ENCODE measurements at regions of chr11 and their contacts with region 1.

Region 1: GRCh38 chr11:119095066-119095880 is 6.4 kb downstream of the DPAGT1 start:
- DNase-seq: peak; percentile 99
- ATAC-seq: peak; percentile 90
- H3K4me3 ChIP-seq: peak overlapping the region; percentile 57
- H3K27ac ChIP-seq: peak overlapping the region; percentile 44; the same call in 1 of the 2 replicates
- H3K4me1 ChIP-seq: peaks cover 15% of the 10 kb centered on the region
- H3K27me3 ChIP-seq: no peaks in the 10 kb centered on the region
- CTCF ChIP-seq: no peak
- POLR2A ChIP-seq: peak; percentile 100
- RAD21 ChIP-seq: no peak

Region 2: GRCh38 chr11:118956094-118956846 is 139.0 kb before region 1 on chr11 and contains the start of gene UPK2:
- CTCF ChIA-PET with region 1: no interaction called
- POLR2A ChIA-PET with region 1: no interaction called
- dilution Hi-C with region 1: no loop called
- in situ Hi-C with region 1: no loop called
- intact Hi-C with region 1: no loop called
- DNase-seq: peak; percentile 71
- ATAC-seq: peak; percentile 100
- H3K4me3 ChIP-seq: no peak within 1 kb of the TSS
- H3K27ac ChIP-seq: no peak within 1 kb of the TSS
- H3K4me1 ChIP-seq: no peaks in the 10 kb centered on the region
- H3K27me3 ChIP-seq: peaks cover 51% of the 10 kb centered on the region
- CTCF ChIP-seq: peak; percentile 97
- POLR2A ChIP-seq: peak; percentile 57; the same call in 1 of the 2 replicates
- RAD21 ChIP-seq: peak; percentile 98
- total RNA-seq, gene UPK2: not detected in 2 replicates

Region 3: DNA sequence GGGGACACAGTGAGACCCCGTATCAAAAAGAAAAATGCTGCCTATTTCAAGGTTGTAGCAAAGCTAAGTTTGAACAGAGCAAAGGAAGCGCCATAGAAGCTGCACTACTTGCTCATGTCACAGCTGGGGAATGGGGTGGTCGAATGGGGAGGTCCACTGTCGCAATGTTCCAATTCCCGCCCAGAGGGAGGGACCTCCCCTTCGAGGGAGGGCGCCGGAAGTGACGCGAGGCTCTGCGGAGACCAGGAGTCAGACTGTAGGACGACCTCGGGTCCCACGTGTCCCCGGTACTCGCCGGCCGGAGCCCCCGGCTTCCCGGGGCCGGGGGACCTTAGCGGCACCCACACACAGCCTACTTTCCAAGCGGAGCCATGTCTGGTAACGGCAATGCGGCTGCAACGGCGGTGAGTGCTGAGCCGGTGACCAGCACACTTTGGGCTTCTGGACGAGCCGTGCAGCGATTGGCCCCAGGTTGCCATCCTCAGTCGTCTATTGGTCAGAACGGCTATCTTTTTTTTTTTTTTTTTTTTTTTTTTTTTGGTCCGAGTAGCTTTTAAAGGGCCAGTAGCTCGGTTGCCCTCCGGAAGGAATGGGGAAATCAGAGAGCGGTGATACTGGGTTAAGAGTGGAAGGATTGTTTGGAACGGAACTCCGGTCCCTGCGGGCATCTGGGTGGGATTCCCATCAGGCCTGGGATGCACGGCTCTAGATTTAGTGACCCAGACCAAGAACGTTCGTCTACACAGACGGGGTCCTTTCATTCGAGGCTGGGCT is 10.4 kb before region 1 on chr11 and contains the start of gene HMBS:
- CTCF ChIA-PET with region 1: no interaction called
- POLR2A ChIA-PET with region 1: interaction called, 10 read pairs
- dilution Hi-C with region 1: no loop called
- in situ Hi-C with region 1: no loop called
- intact Hi-C with region 1: loop called (anchors 1 kb)
- DNase-seq: peak; percentile 94
- ATAC-seq: peak; percentile 96
- H3K4me3 ChIP-seq: peak within 1 kb of the TSS; percentile 74
- H3K27ac ChIP-seq: peak within 1 kb of the TSS; percentile 85
- H3K4me1 ChIP-seq: peaks cover 5% of the 10 kb centered on the region
- H3K27me3 ChIP-seq: no peaks in the 10 kb centered on the region
- CTCF ChIP-seq: no peak
- POLR2A ChIP-seq: peak; percentile 68; the same call in 1 of the 2 replicates
- RAD21 ChIP-seq: no peak
- total RNA-seq, gene HMBS: 13.9 and 17.9 TPM in 2 replicates

Region 4: GRCh38 chr11:119323538-119324033 is 228.3 kb after region 1 on chr11:
- CTCF ChIA-PET with region 1: no interaction called
- POLR2A ChIA-PET with region 1: no interaction called
- dilution Hi-C with region 1: no loop called
- in situ Hi-C with region 1: no loop called
- intact Hi-C with region 1: loop called (anchors 2 kb)
- DNase-seq: peak; percentile 66
- ATAC-seq: no peak
- H3K4me3 ChIP-seq: no peak overlapping the region
- H3K27ac ChIP-seq: no peak overlapping the region
- H3K4me1 ChIP-seq: peaks cover 24% of the 10 kb centered on the region
- H3K27me3 ChIP-seq: no peaks in the 10 kb centered on the region
- CTCF ChIP-seq: peak; percentile 89
- POLR2A ChIP-seq: no peak
- RAD21 ChIP-seq: peak; percentile 81

Measured in IMR-90 (cell line).